ENCODE measurements at regions of chr2 and their contacts with region 1.

Region 1: DNA sequence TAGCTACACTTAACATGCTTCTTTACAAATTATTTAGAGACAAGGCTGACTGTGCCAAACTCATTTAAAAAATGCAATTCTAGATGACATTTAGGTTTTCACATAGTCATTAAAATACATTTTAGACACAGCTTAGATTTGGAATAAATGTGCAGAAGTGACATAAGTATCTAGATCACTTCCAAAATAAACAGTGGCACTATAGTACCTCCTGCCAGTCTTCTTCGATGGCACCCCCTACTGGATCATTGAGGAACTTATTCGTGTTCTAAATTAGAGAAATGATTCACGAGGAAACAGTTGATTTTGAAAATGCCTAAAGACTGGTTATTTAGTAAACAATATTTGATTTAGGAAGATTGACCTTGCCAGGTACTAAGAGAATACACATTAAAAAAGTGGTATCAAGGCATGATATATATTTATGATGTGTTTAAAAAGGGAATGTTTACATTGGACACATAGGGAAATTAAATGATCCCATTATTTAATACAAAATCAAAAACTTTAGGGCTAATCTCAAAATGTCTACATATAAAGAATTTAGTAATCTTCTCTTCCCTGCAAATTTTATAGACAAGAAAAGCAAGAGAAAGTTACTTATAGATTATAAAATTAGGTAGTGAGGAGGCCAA is 323.9 kb downstream of the XIRP2 start:
- DNase-seq: peak; percentile 41
- H3K4me3 Mint-ChIP-seq: no peak overlapping the region
- H3K27ac Mint-ChIP-seq: no peak overlapping the region
- H3K4me1 Mint-ChIP-seq: no peaks in the 10 kb centered on the region
- H3K27me3 Mint-ChIP-seq: no peaks in the 10 kb centered on the region

Region 2: DNA sequence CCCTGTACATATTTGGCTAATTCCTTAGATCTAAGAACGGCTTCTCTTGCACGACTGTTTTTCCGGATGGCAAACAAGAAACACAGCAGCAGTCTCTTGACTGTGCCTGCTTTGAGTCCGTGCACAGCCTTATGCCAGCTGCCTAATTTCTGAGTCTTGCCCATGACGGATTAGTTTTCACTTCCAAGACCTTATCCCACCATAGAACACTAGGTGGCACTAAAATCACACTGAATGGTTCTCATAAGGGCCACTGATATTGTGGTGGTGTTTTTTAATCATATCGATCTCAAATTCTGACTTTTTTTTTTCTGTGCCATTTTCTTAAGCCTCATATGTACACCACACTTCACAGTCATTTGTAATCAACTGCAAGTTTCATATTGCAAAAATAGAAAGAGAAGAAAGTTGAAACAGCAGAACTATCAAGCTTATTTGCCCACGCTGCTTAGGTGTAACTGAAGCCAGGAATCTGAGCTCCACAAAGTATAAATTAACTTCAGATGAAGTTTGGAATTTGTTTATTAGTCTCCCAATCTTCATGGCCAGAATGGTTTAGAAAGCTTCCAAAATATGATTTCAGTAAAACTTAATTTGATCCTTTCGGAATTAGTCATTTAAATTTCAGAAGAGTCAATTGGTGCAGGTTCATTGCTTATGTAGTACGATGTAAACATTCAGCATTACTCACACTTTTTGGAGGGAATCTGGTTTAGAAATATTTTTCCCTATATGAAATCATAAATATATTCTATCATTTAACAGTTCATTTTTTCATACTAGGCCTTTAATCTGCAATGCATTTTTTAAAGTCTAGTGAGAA is 672.6 kb before region 1 on chr2:
- CTCF ChIA-PET with region 1: interaction called, 4 read pairs
- intact Hi-C with region 1: loop called (anchors 1 kb)
- DNase-seq: peak; percentile 21
- H3K4me3 Mint-ChIP-seq: no peak overlapping the region
- H3K27ac Mint-ChIP-seq: no peak overlapping the region
- H3K4me1 Mint-ChIP-seq: no peaks in the 10 kb centered on the region
- H3K27me3 Mint-ChIP-seq: peaks cover 12% of the 10 kb centered on the region

Region 3: DNA sequence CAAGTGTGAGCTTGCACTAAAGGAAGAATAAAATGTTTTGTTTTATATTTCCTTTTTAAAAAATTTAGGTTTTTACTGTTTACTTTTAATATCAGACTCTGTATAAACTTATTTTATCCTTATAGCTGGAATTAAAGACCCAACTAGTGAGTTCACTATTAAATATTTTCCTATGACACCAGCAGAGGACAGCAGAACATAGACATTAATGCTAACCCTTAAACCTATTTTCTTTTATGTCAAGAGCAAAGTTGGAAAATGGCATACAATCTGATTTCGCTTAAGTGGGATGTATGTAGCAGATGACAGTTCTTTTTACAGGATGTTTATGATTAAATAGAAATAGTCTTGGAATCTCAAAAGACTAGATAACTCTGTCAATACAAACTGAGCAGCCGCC is 512.1 kb before region 1 on chr2:
- CTCF ChIA-PET with region 1: no interaction called
- intact Hi-C with region 1: loop called (anchors 2 kb)
- DNase-seq: no peak
- H3K4me3 Mint-ChIP-seq: no peak overlapping the region
- H3K27ac Mint-ChIP-seq: no peak overlapping the region
- H3K4me1 Mint-ChIP-seq: no peaks in the 10 kb centered on the region
- H3K27me3 Mint-ChIP-seq: no peaks in the 10 kb centered on the region

Region 4: DNA sequence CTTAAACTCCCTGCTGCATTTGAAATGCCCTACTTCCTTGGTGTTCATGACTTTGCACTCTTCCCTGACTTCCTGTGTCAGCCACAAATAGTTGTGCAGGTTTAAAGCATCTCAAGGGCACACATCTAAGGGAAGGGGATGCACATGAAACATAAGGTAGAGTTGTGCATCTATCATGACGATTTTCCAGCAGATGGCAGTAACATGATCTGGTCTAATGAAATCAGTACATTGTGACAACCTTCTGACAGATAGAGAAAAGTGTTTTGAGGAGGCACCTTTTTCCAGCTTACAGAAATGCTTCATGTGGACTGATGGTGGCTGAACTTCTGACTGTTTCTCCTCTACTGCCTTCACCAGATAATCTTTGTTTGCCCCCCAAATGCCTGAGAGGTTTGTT is 85.0 kb before region 1 on chr2:
- CTCF ChIA-PET with region 1: no interaction called
- intact Hi-C with region 1: loop called (anchors 1 kb)
- DNase-seq: no peak
- H3K4me3 Mint-ChIP-seq: no peak overlapping the region
- H3K27ac Mint-ChIP-seq: no peak overlapping the region
- H3K4me1 Mint-ChIP-seq: no peaks in the 10 kb centered on the region
- H3K27me3 Mint-ChIP-seq: no peaks in the 10 kb centered on the region